CD4-positive, alpha-beta T cell (primary cell): ENCODE measurements at regions of chr10 and their contacts with region 1.

Region 1: DNA sequence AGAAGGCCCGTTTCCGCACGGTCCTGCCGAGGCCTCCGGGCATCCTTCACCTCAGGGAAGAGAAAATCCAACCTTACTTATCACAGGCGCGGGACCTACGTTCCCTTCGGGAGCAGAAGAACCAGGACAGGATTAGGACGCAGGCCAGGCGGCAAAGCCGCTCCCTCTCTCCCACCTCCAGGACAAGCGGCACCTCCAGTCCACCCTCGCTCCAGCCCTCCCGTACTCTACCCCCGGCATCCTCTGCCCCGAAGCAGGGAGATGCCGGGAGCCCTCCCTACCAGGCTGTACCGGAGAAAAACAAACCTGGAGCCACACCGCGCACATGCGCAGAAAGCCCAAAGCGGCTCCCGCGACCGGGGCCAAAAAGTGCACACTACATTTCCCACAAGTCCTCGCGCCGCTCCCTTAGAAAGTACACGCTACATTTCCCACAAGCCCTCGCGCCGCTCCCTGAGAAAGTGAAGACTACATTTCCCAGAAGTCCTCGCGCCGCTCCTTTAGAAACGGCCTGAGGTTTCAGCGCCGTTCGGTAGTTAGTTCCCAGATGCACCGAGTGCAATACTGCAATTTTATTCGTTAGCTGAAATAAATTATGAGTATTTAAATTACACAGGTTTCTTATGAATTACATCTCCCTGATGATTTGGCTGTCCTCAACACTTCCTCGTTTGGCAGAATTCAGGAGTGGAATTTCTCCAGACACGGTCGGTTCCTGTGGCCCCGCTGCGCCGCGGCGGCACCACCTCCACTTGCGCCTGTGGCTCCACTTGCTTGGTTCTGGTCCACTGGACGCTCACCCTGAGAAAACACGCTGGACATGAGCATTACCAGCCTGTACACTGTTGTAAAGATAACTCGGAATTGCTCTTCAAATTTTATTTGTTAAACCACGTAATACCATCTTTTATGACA is 85.6 kb downstream of the ZNF33B start:
- DNase-seq: peak; percentile 87 to 97 (median 94)
- ATAC-seq: peak; percentile 95
- H3K4me3 ChIP-seq: peak overlapping the region; percentile 85
- H3K4me3 Mint-ChIP-seq: peak overlapping the region; percentile 94
- H3K27ac ChIP-seq: peak overlapping the region; percentile 58 to 75
- H3K27ac Mint-ChIP-seq: peak overlapping the region; percentile 87
- H3K4me1 ChIP-seq: peaks cover 23% of the 10 kb centered on the region
- H3K4me1 Mint-ChIP-seq: peaks cover 46% of the 10 kb centered on the region
- H3K27me3 ChIP-seq: no peaks in the 10 kb centered on the region
- H3K27me3 Mint-ChIP-seq: no peaks in the 10 kb centered on the region
- CTCF ChIP-seq: no peak

Region 2: GRCh38 chr10:42615419-42615818 is 62.7 kb after region 1 on chr10:
- CTCF ChIA-PET with region 1: no interaction called
- POLR2A ChIA-PET with region 1: no interaction called
- intact Hi-C with region 1: no loop called
- DNase-seq: no peak
- ATAC-seq: no peak
- H3K4me3 ChIP-seq: no peak overlapping the region
- H3K4me3 Mint-ChIP-seq: no peak overlapping the region
- H3K27ac ChIP-seq: no peak overlapping the region
- H3K27ac Mint-ChIP-seq: no peak overlapping the region
- H3K4me1 ChIP-seq: peaks cover 3% of the 10 kb centered on the region
- H3K4me1 Mint-ChIP-seq: peaks cover 15% of the 10 kb centered on the region
- H3K27me3 ChIP-seq: no peaks in the 10 kb centered on the region
- H3K27me3 Mint-ChIP-seq: no peaks in the 10 kb centered on the region
- CTCF ChIP-seq: no peak

Region 3: GRCh38 chr10:42638055-42638820 is 85.5 kb after region 1 on chr10 and contains the start of gene ZNF33B:
- CTCF ChIA-PET with region 1: no interaction called
- POLR2A ChIA-PET with region 1: interaction called, 8 read pairs
- intact Hi-C with region 1: loop called (anchors 2 kb)
- DNase-seq: peak; percentile 89 to 97 (median 94)
- ATAC-seq: peak; percentile 91
- H3K4me3 ChIP-seq: peak within 1 kb of the TSS; percentile 71
- H3K4me3 Mint-ChIP-seq: peak within 1 kb of the TSS; percentile 96
- H3K27ac ChIP-seq: peak within 1 kb of the TSS; percentile 91 to 92
- H3K27ac Mint-ChIP-seq: peak within 1 kb of the TSS; percentile 97
- H3K4me1 ChIP-seq: peaks cover 18% of the 10 kb centered on the region
- H3K4me1 Mint-ChIP-seq: peaks cover 52% of the 10 kb centered on the region
- H3K27me3 ChIP-seq: no peaks in the 10 kb centered on the region
- H3K27me3 Mint-ChIP-seq: no peaks in the 10 kb centered on the region
- CTCF ChIP-seq: no peak
- total RNA-seq, gene ZNF33B: 26.6 to 27.0 TPM